AG04449 (cell line): ENCODE measurements at regions of chr6 and their contacts with region 1.

Region 1: DNA sequence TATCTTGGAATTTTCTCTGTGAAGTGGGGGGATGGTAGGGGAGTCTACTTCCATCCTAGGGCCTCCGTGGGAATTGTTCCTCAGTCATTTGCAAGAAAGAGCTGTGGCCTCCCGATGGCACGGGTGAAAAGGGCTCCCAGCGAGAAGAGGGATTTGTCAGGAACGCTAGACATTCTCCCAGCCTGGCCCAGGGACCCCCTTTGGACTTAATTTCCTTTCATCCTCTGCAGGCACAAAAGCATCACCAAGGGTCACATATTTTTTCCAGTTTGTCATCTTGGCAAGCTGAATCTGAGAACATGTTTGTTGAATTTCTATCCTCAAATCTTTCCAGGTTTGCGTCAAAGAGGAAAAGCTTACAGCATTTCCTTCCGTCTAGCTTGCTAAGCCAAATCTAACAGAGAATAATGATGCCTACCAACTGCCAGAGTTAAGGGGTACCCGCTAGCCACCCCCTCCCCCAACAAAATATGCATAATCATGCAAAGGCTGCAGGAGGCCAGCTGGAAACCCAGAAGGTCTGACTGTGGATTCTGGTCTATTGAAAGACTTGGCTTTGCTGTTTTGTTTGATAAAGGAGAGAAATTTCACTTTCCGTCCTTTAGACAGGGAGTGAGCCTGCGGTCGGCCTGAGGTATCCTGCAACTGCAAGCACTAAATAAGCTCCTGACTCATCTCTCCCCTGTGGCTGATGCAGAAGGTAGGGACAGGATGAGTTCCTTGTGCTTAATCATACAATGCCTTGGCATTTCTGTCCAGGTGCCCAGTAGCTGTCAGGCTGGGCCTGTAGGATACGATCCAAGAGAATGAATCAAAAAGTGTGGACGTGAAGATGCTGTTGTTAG is 23.1 kb downstream of the PSMG4 start:
- DNase-seq: peak; percentile 37
- H3K4me3 ChIP-seq: no peak overlapping the region
- CTCF ChIP-seq: no peak

Region 2: GRCh38 chr6:3258720-3259490 is 22.9 kb before region 1 on chr6 and contains the start of gene PSMG4:
- CTCF ChIA-PET with region 1: interaction called, 10 read pairs
- POLR2A ChIA-PET with region 1: no interaction called
- DNase-seq: no peak
- H3K4me3 ChIP-seq: peak within 1 kb of the TSS; percentile 97
- CTCF ChIP-seq: no peak

Region 3: DNA sequence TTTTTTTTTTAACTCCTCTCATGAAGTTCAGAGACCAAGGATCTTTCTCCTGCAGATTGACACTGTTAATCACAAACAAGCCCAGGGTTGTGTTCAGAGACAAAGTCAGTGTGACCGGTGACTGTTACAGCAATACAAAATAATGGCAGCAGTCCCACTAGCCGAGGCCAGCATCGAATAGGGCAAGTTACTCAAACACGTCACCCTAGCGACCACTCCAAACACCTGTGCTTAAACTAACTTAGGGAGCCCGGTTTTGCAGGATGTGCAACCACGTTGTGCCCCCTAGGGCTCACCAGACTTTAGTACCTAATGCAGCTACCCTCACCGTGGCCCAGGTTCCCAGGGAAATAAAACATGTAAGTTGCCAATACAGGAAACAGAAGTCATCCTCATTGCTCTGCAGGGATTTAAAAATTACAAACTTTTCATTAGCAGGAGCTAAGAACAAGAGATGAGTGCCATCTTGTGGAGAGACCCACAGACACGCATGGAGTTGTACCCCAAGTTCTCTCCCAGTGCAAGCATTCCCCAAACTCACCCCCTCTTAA is 605.4 kb after region 1 on chr6:
- CTCF ChIA-PET with region 1: interaction called, 10 read pairs
- POLR2A ChIA-PET with region 1: no interaction called
- DNase-seq: no peak
- H3K4me3 ChIP-seq: no peak overlapping the region
- CTCF ChIP-seq: peak; percentile 55

Region 4: GRCh38 chr6:4008324-4009047 is 726.6 kb after region 1 on chr6:
- CTCF ChIA-PET with region 1: interaction called, 27 read pairs
- POLR2A ChIA-PET with region 1: no interaction called
- DNase-seq: peak; percentile 76
- H3K4me3 ChIP-seq: no peak overlapping the region
- CTCF ChIP-seq: peak; percentile 44